ENCODE measurements at regions of chr12 and their contacts with region 1.

Region 1: GRCh38 chr12:32455607-32456071 is 56.3 kb downstream of the FGD4 start:
- DNase-seq: peak; percentile 47
- CTCF ChIP-seq: peak; percentile 41

Region 2: GRCh38 chr12:32399337-32400113 is 56.1 kb before region 1 on chr12 and contains the start of gene FGD4:
- in situ Hi-C with region 1: no loop called
- DNase-seq: peak; percentile 86
- CTCF ChIP-seq: peak; percentile 31

Region 3: GRCh38 chr12:32679091-32679919 is 223.7 kb after region 1 on chr12 and contains the start of gene DNM1L:
- in situ Hi-C with region 1: loop called (anchors 10 kb)
- DNase-seq: peak; percentile 97
- CTCF ChIP-seq: no peak

Region 4: GRCh38 chr12:32755654-32756475 is 300.2 kb after region 1 on chr12 and contains the start of gene YARS2:
- in situ Hi-C with region 1: loop called (anchors 10 kb)
- DNase-seq: peak; percentile 85
- CTCF ChIP-seq: peak; percentile 76

Region 5: DNA sequence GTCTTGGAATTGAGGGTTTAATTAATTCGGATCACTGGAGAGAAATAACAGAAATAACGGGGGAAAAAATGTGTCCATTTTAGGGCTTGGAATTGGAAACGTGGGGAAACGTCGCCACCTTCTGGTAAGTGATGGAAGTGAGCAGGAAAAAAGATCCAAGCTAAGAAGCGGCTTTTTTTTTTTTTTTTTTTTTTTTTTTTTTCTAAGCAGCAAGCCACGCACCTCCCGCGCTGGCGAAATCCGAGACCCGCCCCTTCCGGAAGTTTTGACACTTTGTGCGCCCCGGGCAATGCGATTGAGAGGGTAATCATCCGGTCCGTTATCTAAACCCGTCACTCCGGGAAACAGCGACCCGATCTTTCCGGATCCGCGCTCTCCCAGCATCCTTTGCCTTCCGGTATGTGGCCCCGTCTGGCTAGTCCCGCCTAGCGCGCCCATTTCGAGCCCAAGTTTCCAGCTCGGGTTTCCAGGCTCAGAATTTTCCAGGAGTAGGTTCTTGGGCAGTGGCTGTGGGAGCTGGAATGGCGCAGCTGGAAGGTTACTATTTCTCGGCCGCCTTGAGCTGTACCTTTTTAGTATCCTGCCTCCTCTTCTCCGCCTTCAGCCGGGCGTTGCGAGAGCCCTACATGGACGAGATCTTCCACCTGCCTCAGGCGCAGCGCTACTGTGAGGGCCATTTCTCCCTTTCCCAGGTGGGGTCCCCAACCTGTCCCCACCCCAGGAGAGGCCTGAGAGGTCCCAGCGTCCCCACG is 1566.6 kb after region 1 on chr12 and contains the start of gene ALG10:
- in situ Hi-C with region 1: loop called (anchors 25 kb)
- DNase-seq: peak; percentile 72
- CTCF ChIP-seq: peak; percentile 66